WTC11 (cell line): ENCODE measurements at regions of chr18 and their contacts with region 1.

Region 1: DNA sequence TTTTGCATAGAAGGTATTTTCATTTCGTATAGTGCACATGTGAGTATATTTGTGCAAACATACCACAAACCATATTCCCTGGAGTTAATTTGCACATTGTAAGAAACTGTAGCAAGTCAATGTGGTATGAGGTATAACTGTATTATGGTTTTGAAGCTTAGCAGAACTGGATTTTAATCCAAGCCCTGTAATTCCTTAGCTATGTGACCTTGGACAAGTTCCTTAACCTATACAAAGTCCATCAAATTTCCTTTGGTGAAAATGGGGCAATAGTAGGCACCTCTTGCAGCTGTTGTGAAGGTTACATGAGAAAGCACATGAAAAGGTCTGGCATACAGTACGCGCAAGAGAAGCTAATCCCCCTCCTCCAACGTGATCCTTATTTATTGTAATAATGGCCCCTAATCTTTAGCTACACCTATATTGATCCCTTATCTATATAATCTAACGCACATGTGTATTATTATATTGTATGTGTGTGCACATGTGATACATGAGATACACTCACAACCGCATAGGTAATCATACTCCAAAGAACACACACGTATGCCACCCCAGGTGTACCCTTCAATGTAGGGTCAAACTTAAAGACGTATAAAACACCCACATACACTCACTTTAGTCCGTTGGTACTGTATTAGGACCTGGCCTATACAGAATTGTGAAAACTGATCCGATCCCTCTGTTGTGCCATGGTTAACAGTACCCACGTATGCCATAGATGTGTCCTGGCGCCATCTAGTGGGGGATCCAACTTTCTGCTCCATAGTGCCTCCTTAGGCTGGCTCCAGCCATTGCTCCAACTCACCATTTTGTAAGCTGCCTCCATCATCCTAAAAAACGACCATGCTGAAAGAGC is 402.9 kb upstream of the SLC14A2 start:
- DNase-seq: peak; percentile 85
- ATAC-seq: peak; percentile 99
- H3K4me3 Mint-ChIP-seq: no peak overlapping the region
- H3K27ac Mint-ChIP-seq: no peak overlapping the region
- H3K4me1 Mint-ChIP-seq: peaks cover 2% of the 10 kb centered on the region; the same call in 1 of the 2 replicates
- H3K27me3 Mint-ChIP-seq: no peaks in the 10 kb centered on the region; the same call in 1 of the 2 replicates
- CTCF ChIP-seq: peak; percentile 70

Region 2: DNA sequence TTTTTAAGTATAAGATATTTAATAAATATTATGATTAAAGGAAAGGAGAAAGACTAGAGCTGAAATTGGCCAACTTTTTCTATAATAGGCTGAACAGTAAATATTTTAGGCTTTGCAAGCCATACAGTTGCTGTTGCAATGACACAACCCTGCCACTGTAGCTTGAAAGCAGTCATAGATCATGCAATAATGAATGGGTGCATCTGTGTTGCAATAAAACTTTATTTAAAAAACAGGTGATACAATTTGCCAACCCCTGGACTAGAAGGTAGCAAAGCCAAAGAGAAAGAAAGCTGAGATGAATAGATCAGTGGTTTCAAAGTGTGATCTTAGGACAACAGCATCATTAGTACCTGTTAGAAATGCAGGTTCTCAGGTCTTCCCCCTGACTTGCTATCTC is 312.6 kb before region 1 on chr18:
- CTCF ChIA-PET with region 1: interaction called, 10 read pairs
- POLR2A ChIA-PET with region 1: no interaction called
- DNase-seq: no peak
- ATAC-seq: no peak
- H3K4me3 Mint-ChIP-seq: no peak overlapping the region
- H3K27ac Mint-ChIP-seq: no peak overlapping the region
- H3K4me1 Mint-ChIP-seq: peaks cover 8% of the 10 kb centered on the region
- H3K27me3 Mint-ChIP-seq: no peaks in the 10 kb centered on the region
- CTCF ChIP-seq: no peak

Region 3: GRCh38 chr18:45227001-45227742 is 14.8 kb after region 1 on chr18:
- CTCF ChIA-PET with region 1: interaction called, 10 read pairs
- POLR2A ChIA-PET with region 1: no interaction called
- DNase-seq: no peak
- ATAC-seq: no peak
- H3K4me3 Mint-ChIP-seq: no peak overlapping the region
- H3K27ac Mint-ChIP-seq: no peak overlapping the region
- H3K4me1 Mint-ChIP-seq: no peaks in the 10 kb centered on the region
- H3K27me3 Mint-ChIP-seq: no peaks in the 10 kb centered on the region
- CTCF ChIP-seq: no peak

Region 4: DNA sequence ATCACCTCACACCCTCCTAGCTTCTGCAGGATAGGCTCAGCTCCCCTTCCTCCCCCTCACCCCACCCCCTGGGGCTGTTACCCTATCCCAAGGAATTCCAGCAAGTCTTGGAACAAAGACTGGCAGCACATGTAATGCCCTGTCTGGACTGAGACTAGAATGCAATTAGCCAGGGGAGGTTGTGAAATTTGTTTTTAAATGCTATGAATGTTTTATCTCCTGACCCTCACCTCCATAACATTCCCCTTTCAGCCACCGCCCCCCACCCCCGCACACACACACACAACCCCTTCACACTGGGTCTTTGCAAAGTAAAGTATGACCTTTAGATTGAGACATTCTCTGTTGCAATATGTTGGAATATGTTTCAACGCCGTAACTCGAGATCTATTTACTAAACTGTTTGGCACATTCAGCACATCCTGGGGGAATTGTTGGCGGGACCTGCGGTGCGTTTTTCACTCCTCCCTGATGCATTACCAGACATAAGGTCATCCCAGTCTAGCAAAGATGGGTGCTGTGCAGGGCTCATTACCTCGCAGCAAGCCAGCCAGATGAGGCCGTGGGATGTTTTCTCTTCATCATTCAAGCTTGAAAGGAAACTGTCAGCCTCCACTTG is 112.2 kb after region 1 on chr18:
- CTCF ChIA-PET with region 1: no interaction called
- POLR2A ChIA-PET with region 1: no interaction called
- DNase-seq: peak; percentile 39
- ATAC-seq: peak; percentile 84
- H3K4me3 Mint-ChIP-seq: no peak overlapping the region
- H3K27ac Mint-ChIP-seq: no peak overlapping the region
- H3K4me1 Mint-ChIP-seq: peaks cover 23% of the 10 kb centered on the region
- H3K27me3 Mint-ChIP-seq: no peaks in the 10 kb centered on the region
- CTCF ChIP-seq: no peak